ENCODE measurements at regions of chr10 and their contacts with region 1.

Region 1: GRCh38 chr10:23975431-23975830 is 233.5 kb upstream of the KIAA1217 start:
- H3K4me3 Mint-ChIP-seq: no peak overlapping the region
- H3K27ac Mint-ChIP-seq: no peak overlapping the region
- H3K4me1 Mint-ChIP-seq: no peaks in the 10 kb centered on the region
- H3K27me3 Mint-ChIP-seq: no peaks in the 10 kb centered on the region

Region 2: DNA sequence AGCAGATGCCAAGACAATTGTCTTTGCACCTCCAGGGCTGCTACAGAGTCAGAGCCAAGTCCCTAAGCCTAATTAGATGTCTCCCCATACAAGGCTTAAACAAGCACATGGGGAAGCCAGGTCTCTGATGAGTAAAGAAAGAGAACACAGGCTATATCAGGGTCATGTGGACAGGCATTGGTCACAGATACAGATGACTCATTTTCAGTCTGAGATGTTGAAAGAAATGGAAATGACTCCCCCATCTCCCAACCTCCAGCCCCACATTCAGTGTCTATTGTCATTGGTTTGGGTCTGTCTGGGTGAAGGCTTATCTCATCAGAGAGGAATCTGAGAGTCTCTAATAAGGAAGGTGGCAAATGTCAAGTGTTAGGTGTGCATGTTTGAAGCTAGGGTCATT is 56.6 kb before region 1 on chr10:
- intact Hi-C with region 1: loop called (anchors 10 kb)
- H3K4me3 Mint-ChIP-seq: no peak overlapping the region
- H3K27ac Mint-ChIP-seq: no peak overlapping the region
- H3K4me1 Mint-ChIP-seq: no peaks in the 10 kb centered on the region
- H3K27me3 Mint-ChIP-seq: no peaks in the 10 kb centered on the region